Right ventricle myocardium inferior (tissue), 1 donor: ENCODE measurements at regions of chr3 and their contacts with region 1.

Region 1: GRCh38 chr3:42247576-42248027 is 18.4 kb downstream of the CCK start:
- DNase-seq: no peak
- ATAC-seq: peak; percentile 23

Region 2: DNA sequence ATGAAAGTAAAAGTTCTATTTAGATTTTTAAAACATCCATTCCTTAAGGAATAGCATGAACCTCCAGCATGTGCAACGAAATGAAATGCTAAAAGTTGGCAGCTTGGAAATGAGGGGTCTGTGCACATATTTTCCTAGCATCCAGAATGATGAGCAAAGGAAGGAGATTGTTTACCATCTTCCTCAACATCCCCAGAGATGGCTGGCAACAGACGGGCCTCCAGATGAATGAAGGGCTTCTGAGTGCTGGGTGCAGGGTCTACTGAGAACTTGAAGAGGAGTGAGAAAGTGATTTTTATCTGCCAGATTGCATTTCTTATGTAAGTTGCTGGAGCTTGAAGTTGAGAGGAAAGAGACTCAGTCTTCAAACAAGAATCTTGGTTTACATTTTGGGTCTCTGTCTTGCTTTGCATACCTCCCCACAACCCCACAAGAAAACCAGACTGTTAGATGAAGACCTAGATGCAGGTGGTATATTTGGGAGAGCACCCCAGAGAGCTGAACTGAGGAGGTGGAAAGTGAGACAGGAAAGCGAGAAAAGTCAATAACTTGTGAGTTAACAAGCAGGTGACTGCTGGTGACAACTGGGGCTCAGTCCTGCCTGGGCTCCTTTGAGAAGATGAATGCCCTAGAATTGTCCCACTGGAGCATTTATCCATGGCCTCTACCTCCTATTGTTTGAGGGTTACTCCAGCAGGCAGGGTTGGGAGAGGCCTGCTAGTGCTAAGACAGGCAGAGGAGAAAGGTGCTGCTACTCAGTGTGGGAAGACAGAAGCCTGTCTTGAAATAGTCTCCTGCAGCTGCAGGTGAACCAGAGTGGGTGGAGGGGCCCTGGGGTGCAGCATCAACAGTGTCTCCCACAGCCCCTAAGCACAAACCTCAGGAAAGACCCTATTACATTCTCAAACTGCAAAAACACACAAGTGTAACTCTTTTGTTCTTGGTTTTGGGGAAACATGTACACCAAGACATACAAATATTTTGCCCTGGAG is 28.8 kb after region 1 on chr3:
- intact Hi-C with region 1: no loop called
- DNase-seq: no peak
- ATAC-seq: no peak

Region 3: DNA sequence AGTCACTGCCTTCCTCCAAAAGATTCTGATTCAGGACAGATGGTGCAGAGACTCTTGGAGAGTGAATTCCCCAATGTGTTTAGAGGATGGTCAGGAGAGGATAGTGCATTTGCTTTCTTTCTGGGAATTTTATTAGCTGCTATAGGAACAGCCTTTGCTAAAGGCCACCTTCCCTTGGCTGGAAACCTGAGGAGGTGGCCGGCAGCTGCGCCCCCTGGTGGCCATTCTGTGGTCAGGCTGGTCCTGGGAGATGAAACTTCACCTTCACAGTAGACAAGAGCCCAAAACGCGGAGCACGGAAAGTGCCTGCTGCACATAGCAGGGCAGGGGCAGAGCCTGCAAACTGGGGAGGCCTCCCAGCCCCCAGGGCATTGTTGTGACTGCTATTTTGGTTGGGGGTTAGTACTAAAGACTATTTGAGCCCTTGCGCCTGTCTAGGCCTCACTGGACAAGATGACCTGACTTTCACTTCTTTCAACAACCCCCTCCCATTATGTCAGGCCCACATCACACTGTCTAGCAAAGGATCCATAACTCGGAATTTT is 299.9 kb after region 1 on chr3:
- intact Hi-C with region 1: loop called (anchors 5 kb)
- DNase-seq: peak; percentile 87
- ATAC-seq: peak; percentile 64